ENCODE measurements at regions of chr13 and their contacts with region 1.

Region 1: GRCh38 chr13:26698392-26699196 is 62.0 kb downstream of the GPR12 start:
- DNase-seq: peak; percentile 77
- H3K4me3 ChIP-seq: peak overlapping the region in 1 of 2 donors; percentile 18
- H3K27ac ChIP-seq: no peak overlapping the region
- H3K4me1 ChIP-seq: no peaks in the 10 kb centered on the region
- H3K27me3 ChIP-seq: no peaks in the 10 kb centered on the region
- CTCF ChIP-seq: peak; percentile 93 to 99 (median 96)
- POLR2A ChIP-seq: no peak

Region 2: DNA sequence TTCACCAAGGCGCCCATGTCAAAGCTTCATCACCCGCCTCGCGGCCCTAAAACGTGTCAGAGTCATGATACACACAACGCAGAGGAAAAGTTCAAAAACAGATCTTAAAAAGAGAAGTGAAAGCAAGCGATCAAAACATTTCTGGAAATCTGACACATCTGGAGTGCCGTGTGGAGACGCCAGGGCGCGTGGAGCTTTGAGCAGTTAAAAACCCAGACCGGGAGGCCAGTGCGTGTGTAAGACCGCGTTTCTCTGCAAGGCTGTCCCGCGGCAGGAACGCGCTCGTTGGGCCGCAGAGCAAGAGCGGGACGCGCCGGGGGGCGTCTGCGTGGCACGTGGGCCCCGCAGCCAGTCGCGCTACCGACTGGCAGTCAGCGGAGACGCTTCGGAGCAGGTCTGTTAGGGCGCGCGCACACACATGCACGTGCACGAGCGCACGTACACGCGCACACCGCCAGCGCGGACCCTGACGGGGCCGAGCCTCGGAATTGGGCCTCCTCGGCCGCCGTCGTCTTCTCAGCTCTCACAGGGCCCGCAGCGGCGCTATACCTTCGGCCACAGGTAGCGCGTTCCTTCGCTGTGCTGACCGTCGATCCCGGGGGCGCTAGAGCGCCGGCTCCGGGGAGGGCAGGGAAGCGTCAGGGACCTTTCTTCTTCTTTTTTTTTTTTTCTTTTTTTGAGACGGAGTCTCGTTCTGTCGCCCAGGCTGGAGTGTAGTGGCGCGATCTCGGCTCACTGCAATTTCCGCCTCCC is 512.3 kb before region 1 on chr13:
- intact Hi-C with region 1: loop called (anchors 5 kb)
- DNase-seq: peak; percentile 87
- H3K4me3 ChIP-seq: peak overlapping the region; percentile 42 to 53
- H3K27ac ChIP-seq: peak overlapping the region; percentile 48 to 67
- H3K4me1 ChIP-seq: no peaks in the 10 kb centered on the region
- H3K27me3 ChIP-seq: no peaks in the 10 kb centered on the region
- CTCF ChIP-seq: peak in 3 of 4 experiments; percentile 27 to 72 (median 68)
- POLR2A ChIP-seq: peak; percentile 29

Region 3: GRCh38 chr13:26482451-26483197 is 216.0 kb before region 1 on chr13:
- intact Hi-C with region 1: loop called (anchors 5 kb)
- DNase-seq: peak; percentile 52
- H3K4me3 ChIP-seq: no peak overlapping the region
- H3K27ac ChIP-seq: no peak overlapping the region
- H3K4me1 ChIP-seq: no peaks in the 10 kb centered on the region
- H3K27me3 ChIP-seq: no peaks in the 10 kb centered on the region
- CTCF ChIP-seq: peak; percentile 70 to 85 (median 76)
- POLR2A ChIP-seq: no peak

Region 4: GRCh38 chr13:26498656-26499591 is 199.7 kb before region 1 on chr13:
- intact Hi-C with region 1: loop called (anchors 5 kb)
- DNase-seq: peak; percentile 8
- H3K4me3 ChIP-seq: no peak overlapping the region
- H3K27ac ChIP-seq: no peak overlapping the region
- H3K4me1 ChIP-seq: no peaks in the 10 kb centered on the region
- H3K27me3 ChIP-seq: no peaks in the 10 kb centered on the region
- CTCF ChIP-seq: peak in 2 of 4 experiments; percentile 11 to 19
- POLR2A ChIP-seq: no peak

Region 5: GRCh38 chr13:26557393-26558023 is 141.1 kb before region 1 on chr13 and contains the start of gene WASF3:
- intact Hi-C with region 1: loop called (anchors 10 kb)
- DNase-seq: peak; percentile 94
- H3K4me3 ChIP-seq: peak within 1 kb of the TSS; percentile 74 to 78
- H3K27ac ChIP-seq: peak within 1 kb of the TSS; percentile 50 to 53
- H3K4me1 ChIP-seq: no peaks in the 10 kb centered on the region
- H3K27me3 ChIP-seq: no peaks in the 10 kb centered on the region
- CTCF ChIP-seq: peak in 1 of 4 experiments; percentile 2
- POLR2A ChIP-seq: no peak
- total RNA-seq, gene WASF3: 10.3 to 23.0 TPM

Region 6: DNA sequence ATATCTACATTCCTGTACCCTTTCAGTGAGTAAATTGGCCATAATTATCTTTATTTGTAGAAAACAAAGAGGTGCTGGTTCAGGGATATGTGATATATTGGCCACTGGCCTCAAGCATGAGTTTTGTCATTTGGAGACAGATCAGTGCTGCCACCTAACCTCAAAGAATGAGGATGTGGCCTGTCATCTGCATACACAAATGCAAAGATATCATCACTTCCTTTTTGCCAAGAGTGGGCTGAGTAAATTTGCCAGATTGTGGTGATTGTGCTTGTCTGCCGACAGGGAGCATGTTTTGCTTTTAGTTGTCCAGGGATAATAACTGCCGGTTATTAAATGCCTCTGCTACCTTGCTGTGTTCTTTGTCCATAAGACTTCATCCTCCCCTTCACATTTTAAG is 96.9 kb before region 1 on chr13:
- intact Hi-C with region 1: loop called (anchors 5 kb)
- DNase-seq: no peak
- H3K4me3 ChIP-seq: no peak overlapping the region
- H3K27ac ChIP-seq: no peak overlapping the region
- H3K4me1 ChIP-seq: no peaks in the 10 kb centered on the region
- H3K27me3 ChIP-seq: no peaks in the 10 kb centered on the region
- CTCF ChIP-seq: peak in 1 of 4 experiments; percentile 15
- POLR2A ChIP-seq: no peak

Measured in prostate gland (tissue), 2 donors.